ENCODE measurements at regions of chr3 and their contacts with region 1.

Region 1: DNA sequence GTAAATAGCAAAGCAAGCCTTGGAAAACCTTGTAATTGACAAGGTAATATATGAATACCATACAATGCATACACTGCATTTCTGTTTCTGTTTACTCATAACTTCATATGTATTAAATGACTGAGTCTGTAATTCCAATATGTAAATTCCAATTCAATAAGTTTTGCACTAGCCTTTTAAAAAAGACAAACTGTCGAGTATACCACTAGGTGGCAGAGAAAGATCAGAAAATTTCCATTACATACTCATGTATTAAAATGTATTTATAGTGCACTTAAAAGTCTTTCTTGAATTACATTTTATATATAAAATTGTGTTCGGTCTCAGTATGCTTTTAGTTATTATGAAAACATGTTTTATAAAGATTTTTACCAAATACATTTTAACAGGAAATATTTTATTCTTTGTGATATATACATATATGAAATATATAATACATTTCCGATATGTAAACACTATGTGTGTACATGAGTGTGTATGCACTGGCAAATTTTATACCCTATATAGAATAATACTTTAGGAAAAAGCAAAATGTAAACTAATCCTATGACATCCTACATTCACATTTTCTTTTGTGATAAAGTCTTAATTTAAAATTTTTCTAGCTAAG is 216.8 kb downstream of the VGLL3 start:
- DNase-seq: peak; percentile 58
- ATAC-seq: peak; percentile 75
- H3K4me3 ChIP-seq: no peak overlapping the region
- H3K27ac ChIP-seq: no peak overlapping the region
- H3K4me1 ChIP-seq: no peaks in the 10 kb centered on the region
- H3K27me3 ChIP-seq: no peaks in the 10 kb centered on the region; the same call in 1 of the 2 replicates
- CTCF ChIP-seq: peak; percentile 65
- POLR2A ChIP-seq: no peak
- RAD21 ChIP-seq: peak; percentile 72

Region 2: GRCh38 chr3:86239946-86240345 is 534.2 kb before region 1 on chr3:
- CTCF ChIA-PET with region 1: no interaction called
- POLR2A ChIA-PET with region 1: no interaction called
- dilution Hi-C with region 1: no loop called
- in situ Hi-C with region 1: no loop called
- intact Hi-C with region 1: no loop called
- DNase-seq: no peak
- ATAC-seq: no peak
- H3K4me3 ChIP-seq: no peak overlapping the region
- H3K27ac ChIP-seq: no peak overlapping the region
- H3K4me1 ChIP-seq: no peaks in the 10 kb centered on the region
- H3K27me3 ChIP-seq: no peaks in the 10 kb centered on the region
- CTCF ChIP-seq: no peak
- POLR2A ChIP-seq: no peak
- RAD21 ChIP-seq: no peak

Region 3: GRCh38 chr3:86537171-86537570 is 237.0 kb before region 1 on chr3:
- CTCF ChIA-PET with region 1: no interaction called
- POLR2A ChIA-PET with region 1: no interaction called
- dilution Hi-C with region 1: no loop called
- in situ Hi-C with region 1: no loop called
- intact Hi-C with region 1: no loop called
- DNase-seq: no peak
- ATAC-seq: no peak
- H3K4me3 ChIP-seq: no peak overlapping the region
- H3K27ac ChIP-seq: no peak overlapping the region
- H3K4me1 ChIP-seq: no peaks in the 10 kb centered on the region
- H3K27me3 ChIP-seq: no peaks in the 10 kb centered on the region
- CTCF ChIP-seq: no peak
- POLR2A ChIP-seq: no peak
- RAD21 ChIP-seq: no peak

Region 4: GRCh38 chr3:87145553-87145952 is 371.4 kb after region 1 on chr3:
- CTCF ChIA-PET with region 1: interaction called, 3 read pairs
- POLR2A ChIA-PET with region 1: no interaction called
- dilution Hi-C with region 1: no loop called
- in situ Hi-C with region 1: no loop called
- intact Hi-C with region 1: loop called (anchors 1 kb)
- DNase-seq: peak; percentile 45
- ATAC-seq: peak; percentile 65; the same call in 1 of the 2 replicates
- H3K4me3 ChIP-seq: no peak overlapping the region
- H3K27ac ChIP-seq: no peak overlapping the region
- H3K4me1 ChIP-seq: no peaks in the 10 kb centered on the region
- H3K27me3 ChIP-seq: no peaks in the 10 kb centered on the region; the same call in 1 of the 2 replicates
- CTCF ChIP-seq: peak; percentile 46
- POLR2A ChIP-seq: no peak
- RAD21 ChIP-seq: peak; percentile 52

Region 5: DNA sequence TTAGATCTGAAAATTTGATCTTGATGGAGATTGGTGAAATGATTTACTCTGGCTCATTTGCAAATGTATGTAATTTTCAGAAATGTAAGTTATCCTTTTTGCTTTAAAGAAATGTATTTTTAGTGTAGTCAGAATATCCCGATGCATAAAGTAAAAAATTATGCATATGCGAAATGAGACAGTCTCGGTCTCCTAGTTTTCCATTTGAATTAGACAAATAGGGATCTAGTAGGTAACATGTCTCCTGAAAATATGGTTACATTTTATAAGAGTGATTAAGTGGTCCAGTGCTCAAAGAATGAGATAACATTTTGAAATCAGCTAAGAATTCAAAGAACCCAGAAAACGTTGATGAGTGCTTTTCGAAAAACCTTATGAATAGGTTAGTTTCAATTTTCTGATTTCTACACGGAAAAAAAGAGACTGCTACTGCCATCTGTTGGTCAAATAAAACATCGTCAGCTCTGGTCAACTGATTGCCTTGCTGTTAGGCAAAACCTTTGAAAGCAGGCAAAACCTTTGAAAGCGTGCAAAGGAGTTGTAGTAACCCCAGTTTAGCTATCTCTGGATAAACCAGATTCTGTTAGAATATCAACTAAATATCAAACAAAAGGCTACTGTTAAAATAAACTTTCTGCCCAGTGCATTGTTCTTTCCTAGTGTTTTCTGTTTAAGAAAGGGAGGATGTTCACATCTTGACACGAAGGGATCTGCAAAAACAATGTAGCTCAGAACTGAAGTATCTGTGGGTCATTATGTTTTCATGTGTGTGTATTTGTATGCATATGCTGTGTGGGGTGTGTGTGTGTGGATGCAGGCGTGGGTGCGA is 393.7 kb after region 1 on chr3:
- CTCF ChIA-PET with region 1: interaction called, 9 read pairs
- POLR2A ChIA-PET with region 1: no interaction called
- dilution Hi-C with region 1: no loop called
- in situ Hi-C with region 1: loop called (anchors 10 kb)
- intact Hi-C with region 1: loop called (anchors 1 kb)
- DNase-seq: peak; percentile 20
- ATAC-seq: peak; percentile 51
- H3K4me3 ChIP-seq: no peak overlapping the region
- H3K27ac ChIP-seq: no peak overlapping the region
- H3K4me1 ChIP-seq: no peaks in the 10 kb centered on the region
- H3K27me3 ChIP-seq: no peaks in the 10 kb centered on the region
- CTCF ChIP-seq: peak; percentile 52
- POLR2A ChIP-seq: no peak
- RAD21 ChIP-seq: peak; percentile 44

Region 6: DNA sequence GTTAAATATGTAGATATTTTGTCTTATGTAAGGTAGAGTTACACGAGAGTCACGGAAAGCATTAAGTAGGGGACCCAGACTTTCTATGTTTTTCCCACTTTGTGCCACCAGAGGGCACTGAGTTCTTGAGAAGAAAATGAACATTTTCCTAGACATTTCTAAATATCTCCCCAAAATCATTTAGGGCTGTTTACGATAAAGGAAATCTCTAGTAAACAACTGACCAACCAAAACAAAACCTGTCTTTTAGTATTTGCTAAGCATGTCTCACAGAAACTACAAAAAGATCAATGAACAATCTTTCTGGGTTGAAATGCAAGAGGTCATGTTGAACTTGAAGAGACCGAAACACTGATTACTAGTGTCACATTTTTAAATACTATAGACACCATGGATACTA is 486.1 kb after region 1 on chr3:
- CTCF ChIA-PET with region 1: interaction called, 5 read pairs
- POLR2A ChIA-PET with region 1: no interaction called
- dilution Hi-C with region 1: no loop called
- in situ Hi-C with region 1: no loop called
- intact Hi-C with region 1: loop called (anchors 10 kb)
- DNase-seq: peak; percentile 51
- ATAC-seq: peak; percentile 62
- H3K4me3 ChIP-seq: no peak overlapping the region
- H3K27ac ChIP-seq: no peak overlapping the region
- H3K4me1 ChIP-seq: no peaks in the 10 kb centered on the region
- H3K27me3 ChIP-seq: no peaks in the 10 kb centered on the region
- CTCF ChIP-seq: peak; percentile 57
- POLR2A ChIP-seq: no peak
- RAD21 ChIP-seq: peak; percentile 33